Posterior vena cava (tissue), 2 donors: ENCODE measurements at regions of chr1 and their contacts with region 1.

Region 1: GRCh38 chr1:174800216-174800851 is 199.4 kb upstream of the CACYBP start:
- DNase-seq: no peak

Region 2: DNA sequence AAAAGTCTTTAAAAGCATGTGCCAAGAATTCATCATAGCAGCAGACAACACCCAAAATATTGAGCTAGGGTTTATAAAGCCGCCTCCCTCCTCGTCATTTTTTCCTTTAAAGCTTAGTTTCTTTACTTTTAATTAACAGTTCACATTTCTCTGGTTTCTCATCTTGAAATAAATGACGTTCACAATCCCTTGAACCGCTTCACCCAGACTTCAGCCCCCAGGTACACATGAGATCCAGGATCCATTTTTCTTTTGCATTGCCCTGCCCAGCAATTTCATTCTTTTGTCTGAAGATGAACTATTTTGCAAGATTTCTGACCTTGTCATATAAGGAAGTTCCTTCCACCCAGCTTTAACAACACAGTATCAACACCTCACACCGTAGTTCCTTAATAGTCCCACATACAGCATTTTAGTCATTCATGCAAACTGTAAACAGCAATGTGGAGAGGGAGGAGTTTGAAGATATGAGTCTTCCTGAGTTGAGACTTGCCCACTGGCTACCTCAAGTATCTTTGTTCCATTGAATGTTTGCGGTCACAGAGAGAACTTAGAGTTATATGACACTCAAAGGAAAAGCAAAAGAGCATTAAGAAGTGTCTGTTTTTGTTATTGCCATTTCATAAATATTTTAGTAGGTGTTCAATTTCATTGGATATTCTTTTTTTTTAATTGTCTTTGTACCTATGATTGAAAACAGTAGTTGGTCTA is 164.1 kb after region 1 on chr1:
- intact Hi-C with region 1: loop called in 1 of 2 experiments (anchors 5 kb)
- DNase-seq: no peak

Region 3: GRCh38 chr1:174976436-174977108 is 176.2 kb after region 1 on chr1:
- intact Hi-C with region 1: loop called in 1 of 2 experiments (anchors 10 kb)
- DNase-seq: no peak

Region 4: GRCh38 chr1:176765608-176766007 is 1965.3 kb after region 1 on chr1:
- intact Hi-C with region 1: no loop called
- DNase-seq: no peak